Activated CD4-positive, alpha-beta T cell treated with anti-CD3 and anti-CD28 coated beads, Interleukin-2, amount 10 ng/mL, durations not matched to agents 7 days and 5 days (primary cell): ENCODE measurements at regions of chr15 and their contacts with region 1.

Region 1: GRCh38 chr15:76994971-76995945 is at the start of gene PSTPIP1:
- DNase-seq: peak; percentile 78
- H3K4me3 Mint-ChIP-seq: peak within 1 kb of the TSS; percentile 95
- H3K27ac Mint-ChIP-seq: peak within 1 kb of the TSS; percentile 98
- H3K4me1 Mint-ChIP-seq: peaks cover 71% of the 10 kb centered on the region
- H3K27me3 Mint-ChIP-seq: no peaks in the 10 kb centered on the region
- total RNA-seq, gene PSTPIP1: 135 to 176 TPM

Region 2: GRCh38 chr15:76963596-76963995 is 31.7 kb before region 1 on chr15:
- CTCF ChIA-PET with region 1: no interaction called
- POLR2A ChIA-PET with region 1: no interaction called
- DNase-seq: no peak
- H3K4me3 Mint-ChIP-seq: no peak overlapping the region
- H3K27ac Mint-ChIP-seq: no peak overlapping the region
- H3K4me1 Mint-ChIP-seq: no peaks in the 10 kb centered on the region
- H3K27me3 Mint-ChIP-seq: peaks cover 25% of the 10 kb centered on the region

Region 3: DNA sequence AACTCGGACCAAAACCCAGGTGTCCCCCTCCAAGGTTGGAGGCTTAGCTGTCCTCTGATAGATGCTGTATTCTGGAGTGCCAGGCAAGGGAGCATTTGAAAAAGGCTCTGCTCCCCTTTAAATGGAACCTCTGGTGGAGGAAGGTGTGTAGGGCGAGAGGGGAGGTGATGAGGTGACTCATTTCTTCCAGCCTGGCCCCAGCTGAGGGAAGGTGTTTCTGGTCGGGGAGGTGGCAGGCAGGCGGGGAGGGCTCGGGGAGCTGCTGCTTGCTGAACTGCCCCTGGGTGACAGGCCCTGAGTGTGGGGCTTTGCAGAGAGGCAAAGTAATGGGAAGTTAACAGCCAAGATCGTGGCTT is 18.5 kb after region 1 on chr15:
- CTCF ChIA-PET with region 1: interaction called, 10 read pairs
- POLR2A ChIA-PET with region 1: no interaction called
- DNase-seq: peak; percentile 86
- H3K4me3 Mint-ChIP-seq: peak overlapping the region; percentile 61
- H3K27ac Mint-ChIP-seq: peak overlapping the region; percentile 93
- H3K4me1 Mint-ChIP-seq: peaks cover 90% of the 10 kb centered on the region
- H3K27me3 Mint-ChIP-seq: no peaks in the 10 kb centered on the region

Region 4: GRCh38 chr15:77024271-77025082 is 29.2 kb after region 1 on chr15:
- CTCF ChIA-PET with region 1: interaction called, 11 read pairs
- POLR2A ChIA-PET with region 1: no interaction called
- DNase-seq: peak; percentile 63
- H3K4me3 Mint-ChIP-seq: no peak overlapping the region
- H3K27ac Mint-ChIP-seq: peak overlapping the region; percentile 80
- H3K4me1 Mint-ChIP-seq: peaks cover 53% of the 10 kb centered on the region
- H3K27me3 Mint-ChIP-seq: no peaks in the 10 kb centered on the region

Region 5: DNA sequence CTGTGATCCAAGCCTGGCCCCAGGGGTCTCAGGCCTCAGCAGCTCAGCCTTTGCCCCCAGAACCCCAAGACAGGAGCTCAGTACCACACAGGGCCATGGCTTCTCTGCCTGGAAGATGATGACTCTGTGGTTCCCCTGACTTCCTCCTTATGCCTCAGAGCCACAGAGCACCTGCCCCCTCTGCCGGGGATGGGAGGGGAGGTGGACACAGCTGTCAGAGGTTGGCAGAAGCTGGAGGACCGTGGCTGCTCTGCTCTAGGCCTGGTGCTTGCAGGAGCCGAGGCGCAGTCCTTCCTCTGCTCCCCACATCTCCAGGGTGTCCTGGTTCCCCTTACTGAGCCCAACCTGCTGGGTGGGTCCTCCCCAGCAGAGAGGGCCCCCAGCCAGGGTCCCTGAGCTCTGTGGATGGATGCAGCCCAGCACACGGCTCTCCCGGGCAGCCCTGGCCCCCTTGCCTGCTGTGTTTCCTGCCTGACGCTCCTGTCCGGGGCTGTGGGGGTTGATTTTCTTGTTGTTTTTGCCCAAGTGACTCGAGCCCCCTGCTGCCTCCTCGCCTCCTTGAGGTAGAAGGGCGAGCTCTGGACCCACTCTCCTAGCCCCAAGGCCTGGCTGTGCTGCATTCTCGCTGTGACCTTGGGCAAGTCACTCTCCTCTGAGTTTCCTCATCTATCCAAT is 36.3 kb after region 1 on chr15:
- CTCF ChIA-PET with region 1: interaction called, 11 read pairs
- POLR2A ChIA-PET with region 1: no interaction called
- DNase-seq: peak; percentile 47
- H3K4me3 Mint-ChIP-seq: no peak overlapping the region
- H3K27ac Mint-ChIP-seq: no peak overlapping the region
- H3K4me1 Mint-ChIP-seq: peaks cover 9% of the 10 kb centered on the region
- H3K27me3 Mint-ChIP-seq: no peaks in the 10 kb centered on the region